Caco-2 (cell line): ENCODE measurements at regions of chr10 and their contacts with region 1.

Region 1: GRCh38 chr10:117442944-117443685 is 67.9 kb upstream of the PDZD8 start:
- DNase-seq: peak in 1 of 2 experiments; percentile 57
- H3K4me3 ChIP-seq: no peak overlapping the region
- H3K4me3 Mint-ChIP-seq: no peak overlapping the region
- H3K27ac Mint-ChIP-seq: no peak overlapping the region
- H3K4me1 ChIP-seq: no peaks in the 10 kb centered on the region
- H3K4me1 Mint-ChIP-seq: no peaks in the 10 kb centered on the region
- H3K27me3 ChIP-seq: no peaks in the 10 kb centered on the region
- H3K27me3 Mint-ChIP-seq: no peaks in the 10 kb centered on the region
- CTCF ChIP-seq: peak; percentile 47 to 86

Region 2: GRCh38 chr10:117398029-117398428 is 45.1 kb before region 1 on chr10:
- CTCF ChIA-PET with region 1: no interaction called
- POLR2A ChIA-PET with region 1: no interaction called
- intact Hi-C with region 1: no loop called
- DNase-seq: no peak
- H3K4me3 ChIP-seq: no peak overlapping the region
- H3K4me3 Mint-ChIP-seq: no peak overlapping the region
- H3K27ac Mint-ChIP-seq: no peak overlapping the region
- H3K4me1 ChIP-seq: no peaks in the 10 kb centered on the region
- H3K4me1 Mint-ChIP-seq: no peaks in the 10 kb centered on the region
- H3K27me3 ChIP-seq: no peaks in the 10 kb centered on the region
- H3K27me3 Mint-ChIP-seq: no peaks in the 10 kb centered on the region
- CTCF ChIP-seq: no peak

Region 3: DNA sequence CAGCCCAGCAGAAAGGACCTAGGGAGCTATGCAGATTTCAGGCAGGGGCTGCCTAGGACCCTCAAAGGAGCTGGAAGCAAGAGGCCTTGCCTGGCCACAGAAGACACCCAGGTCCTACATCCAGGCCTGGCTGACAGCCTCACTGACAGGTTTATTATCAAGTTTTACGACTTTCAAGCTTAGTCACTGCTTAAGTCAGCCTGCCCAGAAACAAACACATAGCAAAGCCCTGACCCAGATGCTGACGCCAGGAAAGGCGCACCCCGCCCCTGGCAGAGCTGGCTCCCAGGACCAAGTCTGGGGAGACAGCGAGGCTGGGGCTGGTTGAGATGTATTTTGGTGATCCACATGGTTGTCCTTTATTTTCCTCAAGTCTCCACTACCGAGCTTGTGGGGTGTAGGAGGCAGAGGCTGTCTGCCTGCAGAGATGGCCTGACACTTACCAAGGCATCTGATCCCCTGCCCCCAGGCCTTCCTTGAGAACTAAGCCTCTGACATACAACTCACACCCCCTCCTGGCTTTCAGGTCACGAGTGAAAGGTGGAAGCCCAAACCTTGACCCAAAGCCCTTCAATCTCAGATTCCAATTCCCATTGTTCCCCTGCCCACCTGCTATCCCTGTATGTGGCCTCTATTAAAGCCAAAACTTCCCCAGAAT is 18.8 kb after region 1 on chr10:
- CTCF ChIA-PET with region 1: interaction called, 11 read pairs
- POLR2A ChIA-PET with region 1: no interaction called
- intact Hi-C with region 1: no loop called
- DNase-seq: peak; percentile 58 to 61
- H3K4me3 ChIP-seq: no peak overlapping the region
- H3K4me3 Mint-ChIP-seq: no peak overlapping the region
- H3K27ac Mint-ChIP-seq: no peak overlapping the region
- H3K4me1 ChIP-seq: peaks cover 10% of the 10 kb centered on the region
- H3K4me1 Mint-ChIP-seq: no peaks in the 10 kb centered on the region
- H3K27me3 ChIP-seq: no peaks in the 10 kb centered on the region
- H3K27me3 Mint-ChIP-seq: no peaks in the 10 kb centered on the region
- CTCF ChIP-seq: peak in 1 of 2 experiments; percentile 6

Region 4: DNA sequence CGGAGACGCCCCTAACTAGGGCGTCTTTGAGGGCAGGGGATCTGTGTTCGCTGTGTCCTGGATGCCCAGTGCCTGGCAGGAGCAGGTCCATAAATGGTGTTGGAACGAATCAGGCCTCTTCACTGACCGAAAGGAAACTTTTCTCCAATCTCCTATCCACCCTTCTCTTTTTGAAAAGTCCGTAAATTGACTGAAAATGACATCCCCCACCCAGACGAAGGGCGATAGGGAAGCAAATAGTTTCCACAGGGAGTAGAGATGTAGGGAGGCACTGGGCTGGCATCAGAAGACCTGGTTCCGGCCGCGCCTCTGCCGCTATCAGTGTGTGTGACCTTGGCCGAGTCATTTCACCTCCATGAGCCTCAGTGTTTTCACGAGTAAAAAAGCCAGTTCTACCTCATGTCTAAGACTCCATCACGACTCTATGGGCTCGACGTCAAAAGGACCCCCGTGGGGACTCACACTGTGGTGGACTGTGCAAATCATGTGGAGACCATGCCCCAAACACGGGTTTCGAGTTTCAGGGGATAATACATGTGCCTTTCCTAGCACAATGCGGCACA is 604.1 kb after region 1 on chr10:
- CTCF ChIA-PET with region 1: no interaction called
- POLR2A ChIA-PET with region 1: no interaction called
- intact Hi-C with region 1: no loop called
- DNase-seq: no peak
- H3K4me3 ChIP-seq: peak overlapping the region; percentile 89
- H3K4me3 Mint-ChIP-seq: peak overlapping the region; percentile 77
- H3K27ac Mint-ChIP-seq: peak overlapping the region; percentile 81
- H3K4me1 ChIP-seq: 0 out of 2 replicates have a peak, but pooled peaks cover 6% of the 10 kb centered on the region
- H3K4me1 Mint-ChIP-seq: peaks cover 7% of the 10 kb centered on the region
- H3K27me3 ChIP-seq: no peaks in the 10 kb centered on the region
- H3K27me3 Mint-ChIP-seq: no peaks in the 10 kb centered on the region
- CTCF ChIP-seq: no peak